Activated naive CD4-positive, alpha-beta T cell treated with anti-CD3 and anti-CD28 coated beads for 36 hours (primary cell): ENCODE measurements at regions of chr9 and their contacts with region 1.

Region 1: DNA sequence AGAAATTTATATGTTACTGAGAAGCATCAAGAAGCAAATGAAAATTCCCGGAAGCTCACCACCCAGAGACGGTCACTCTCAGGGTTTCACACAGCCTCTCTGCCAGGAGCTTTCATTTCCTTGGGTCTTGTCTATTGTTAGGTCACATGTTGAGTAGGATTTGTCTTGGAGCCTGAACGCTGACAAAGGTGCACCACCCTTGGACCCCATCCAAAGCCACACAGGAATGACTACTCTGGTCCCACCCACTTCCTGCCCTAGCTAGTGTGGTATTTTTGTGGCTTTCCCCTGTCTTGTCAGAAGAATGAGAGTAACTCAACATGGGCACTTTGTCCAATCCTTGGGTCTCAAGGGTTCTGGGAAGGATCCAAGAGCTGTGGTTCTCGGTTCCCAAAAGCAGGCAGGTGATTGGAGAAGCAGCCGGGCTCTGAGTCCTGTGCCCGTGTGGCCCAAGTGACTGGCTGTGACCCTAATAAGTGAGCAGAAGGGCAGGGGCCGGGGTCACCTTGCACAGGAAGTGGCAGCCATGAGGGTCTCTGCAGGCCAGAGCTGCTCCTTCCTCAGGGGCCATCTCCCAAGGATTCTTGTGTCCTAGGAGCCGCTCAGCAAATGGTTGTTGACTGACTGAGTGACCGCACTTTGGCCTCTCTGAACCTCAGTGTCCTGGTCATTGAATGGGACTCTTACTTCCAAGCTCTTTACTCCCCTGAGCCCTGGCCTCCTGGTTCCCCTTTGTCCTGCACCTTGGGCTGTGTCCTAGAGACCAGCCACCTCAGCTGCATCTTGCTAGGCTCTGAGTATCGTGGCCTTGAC is 6.9 kb downstream of the FGD3 start:
- DNase-seq: peak; percentile 95
- H3K4me3 Mint-ChIP-seq: peak overlapping the region; percentile 60
- H3K27ac Mint-ChIP-seq: peak overlapping the region; percentile 91
- H3K4me1 Mint-ChIP-seq: peaks cover 75% of the 10 kb centered on the region
- H3K27me3 Mint-ChIP-seq: no peaks in the 10 kb centered on the region

Region 2: DNA sequence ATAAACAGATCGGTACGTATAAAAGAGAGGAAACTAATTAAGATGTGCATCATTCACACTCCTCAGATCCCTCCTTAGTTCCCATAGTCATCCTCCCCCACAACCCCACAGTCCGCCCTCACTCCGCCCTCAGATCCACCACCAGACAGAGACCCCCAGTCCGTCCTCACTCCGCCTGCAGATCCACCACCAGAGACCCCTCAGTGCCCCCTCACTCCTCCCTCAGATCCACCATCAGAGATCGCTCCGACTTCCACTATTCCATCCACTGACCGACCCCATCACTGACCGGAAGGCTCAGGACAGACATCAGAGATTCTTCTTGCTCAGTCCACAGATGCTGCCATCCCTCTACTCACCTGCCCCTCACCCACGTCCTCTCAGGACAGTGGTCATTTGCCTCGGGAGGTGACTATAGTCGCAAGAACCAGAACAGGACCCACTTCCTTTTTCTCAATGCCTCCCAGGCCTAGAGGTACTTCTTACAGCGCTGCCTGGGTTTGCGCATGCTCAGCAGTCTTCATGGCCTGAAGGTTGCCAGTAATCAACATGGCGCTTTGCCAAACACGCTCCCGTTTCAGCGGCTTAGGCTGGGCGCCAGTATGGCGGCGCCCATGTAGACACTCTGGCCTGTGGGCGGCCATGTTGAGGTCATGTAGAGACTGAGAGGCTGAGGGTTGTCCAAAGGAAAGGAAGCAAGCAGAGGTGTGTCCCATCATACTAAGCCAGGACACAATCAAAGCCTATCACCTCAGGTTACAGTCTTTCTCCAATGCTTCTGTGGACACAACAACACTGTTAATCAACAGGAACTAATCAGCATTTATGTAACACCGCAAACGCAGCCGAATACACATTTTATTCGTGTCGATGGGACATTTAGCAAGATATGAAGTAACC is 76.5 kb before region 1 on chr9 and contains the start of gene ZNF484:
- CTCF ChIA-PET with region 1: interaction called, 4 read pairs
- intact Hi-C with region 1: loop called (anchors 2 kb)
- DNase-seq: peak; percentile 99
- H3K4me3 Mint-ChIP-seq: peak within 1 kb of the TSS; percentile 87
- H3K27ac Mint-ChIP-seq: peak within 1 kb of the TSS; percentile 94
- H3K4me1 Mint-ChIP-seq: peaks cover 40% of the 10 kb centered on the region
- H3K27me3 Mint-ChIP-seq: no peaks in the 10 kb centered on the region
- total RNA-seq, gene ZNF484: 5.8 to 6.5 TPM

Region 3: GRCh38 chr9:93051680-93052089 is 97.4 kb after region 1 on chr9:
- CTCF ChIA-PET with region 1: no interaction called
- intact Hi-C with region 1: no loop called
- DNase-seq: no peak
- H3K4me3 Mint-ChIP-seq: no peak overlapping the region
- H3K27ac Mint-ChIP-seq: no peak overlapping the region
- H3K4me1 Mint-ChIP-seq: peaks cover 21% of the 10 kb centered on the region
- H3K27me3 Mint-ChIP-seq: no peaks in the 10 kb centered on the region

Region 4: GRCh38 chr9:93302551-93303257 is 348.4 kb after region 1 on chr9:
- CTCF ChIA-PET with region 1: interaction called, 4 read pairs
- intact Hi-C with region 1: loop called (anchors 2 kb)
- DNase-seq: peak; percentile 73
- H3K4me3 Mint-ChIP-seq: no peak overlapping the region
- H3K27ac Mint-ChIP-seq: no peak overlapping the region
- H3K4me1 Mint-ChIP-seq: no peaks in the 10 kb centered on the region
- H3K27me3 Mint-ChIP-seq: no peaks in the 10 kb centered on the region